Activated CD4-positive, alpha-beta T cell treated with anti-CD3 and anti-CD28 coated beads for 36 hours (primary cell): ENCODE measurements at regions of chr12 and their contacts with region 1.

Region 1: GRCh38 chr12:11771356-11771755 is 121.9 kb downstream of the ETV6 start:
- DNase-seq: peak; percentile 48
- ATAC-seq: peak; percentile 45
- H3K4me3 Mint-ChIP-seq: no peak overlapping the region
- H3K27ac Mint-ChIP-seq: peak overlapping the region; percentile 79
- H3K4me1 Mint-ChIP-seq: peaks cover 94% of the 10 kb centered on the region
- H3K27me3 Mint-ChIP-seq: no peaks in the 10 kb centered on the region

Region 2: GRCh38 chr12:11592484-11592883 is 178.9 kb before region 1 on chr12:
- CTCF ChIA-PET with region 1: no interaction called
- POLR2A ChIA-PET with region 1: no interaction called
- intact Hi-C with region 1: no loop called
- DNase-seq: no peak
- ATAC-seq: no peak
- H3K4me3 Mint-ChIP-seq: no peak overlapping the region
- H3K27ac Mint-ChIP-seq: no peak overlapping the region
- H3K4me1 Mint-ChIP-seq: no peaks in the 10 kb centered on the region
- H3K27me3 Mint-ChIP-seq: peaks cover 1% of the 10 kb centered on the region

Region 3: GRCh38 chr12:11868027-11868426 is 96.7 kb after region 1 on chr12:
- CTCF ChIA-PET with region 1: no interaction called
- POLR2A ChIA-PET with region 1: no interaction called
- intact Hi-C with region 1: no loop called
- DNase-seq: peak; percentile 28
- ATAC-seq: peak; percentile 95
- H3K4me3 Mint-ChIP-seq: no peak overlapping the region
- H3K27ac Mint-ChIP-seq: no peak overlapping the region
- H3K4me1 Mint-ChIP-seq: peaks cover 44% of the 10 kb centered on the region
- H3K27me3 Mint-ChIP-seq: no peaks in the 10 kb centered on the region

Region 4: GRCh38 chr12:11877869-11878780 is 106.8 kb after region 1 on chr12:
- CTCF ChIA-PET with region 1: no interaction called
- POLR2A ChIA-PET with region 1: no interaction called
- intact Hi-C with region 1: loop called (anchors 2 to 5 kb)
- DNase-seq: peak; percentile 32
- ATAC-seq: peak; percentile 28
- H3K4me3 Mint-ChIP-seq: no peak overlapping the region
- H3K27ac Mint-ChIP-seq: peak overlapping the region; percentile 73
- H3K4me1 Mint-ChIP-seq: peaks cover 52% of the 10 kb centered on the region
- H3K27me3 Mint-ChIP-seq: no peaks in the 10 kb centered on the region

Region 5: DNA sequence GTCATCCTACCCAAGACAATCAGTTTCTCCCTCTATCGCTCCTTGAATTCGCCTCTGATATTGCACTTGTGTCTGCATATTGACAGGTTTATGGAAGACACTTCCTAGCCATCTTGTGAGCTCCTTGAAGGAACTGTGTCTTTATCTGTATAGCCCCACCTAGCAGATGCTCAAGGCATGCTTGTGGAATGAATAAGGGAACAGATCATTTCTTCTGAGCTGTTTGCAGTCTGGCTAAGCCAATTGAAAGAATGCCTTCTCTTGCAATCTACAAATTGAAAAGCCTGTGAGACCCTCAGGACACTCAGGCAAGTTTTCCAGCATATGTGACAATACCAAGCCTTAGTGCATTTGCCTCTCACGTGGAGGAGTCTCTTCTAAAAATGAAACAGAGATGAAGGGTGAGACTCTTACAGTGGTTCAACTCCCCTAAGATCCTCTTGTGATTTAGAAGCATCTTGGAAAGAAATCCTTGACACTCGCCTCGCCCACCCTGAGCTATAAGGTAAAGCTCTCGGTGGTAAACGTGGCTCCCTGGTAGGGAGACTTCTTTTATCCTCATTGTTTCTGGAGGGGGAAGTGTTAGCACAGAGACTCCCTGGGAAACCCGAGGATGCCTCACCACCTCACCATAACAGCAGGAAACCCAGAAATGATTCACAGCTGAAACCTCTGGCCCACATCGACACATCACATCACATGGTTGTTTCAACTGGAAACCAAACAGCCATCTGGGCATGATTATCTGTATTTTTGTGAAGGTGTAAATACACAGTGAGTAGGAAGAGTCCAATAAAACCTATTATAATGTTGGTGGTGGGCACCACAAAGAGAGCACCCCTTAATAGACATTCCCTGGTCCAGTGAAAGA is 187.1 kb after region 1 on chr12:
- CTCF ChIA-PET with region 1: interaction called, 4 read pairs
- POLR2A ChIA-PET with region 1: no interaction called
- intact Hi-C with region 1: loop called in 1 of 2 experiments (anchors 2 kb)
- DNase-seq: peak; percentile 78
- ATAC-seq: peak; percentile 97
- H3K4me3 Mint-ChIP-seq: peak overlapping the region; percentile 11
- H3K27ac Mint-ChIP-seq: peak overlapping the region; percentile 86
- H3K4me1 Mint-ChIP-seq: peaks cover 36% of the 10 kb centered on the region
- H3K27me3 Mint-ChIP-seq: peaks cover 11% of the 10 kb centered on the region